ENCODE measurements at regions of chr4 and their contacts with region 1.

Region 1: GRCh38 chr4:69836287-69836686 is 23.7 kb downstream of the SULT1E1 start:
- DNase-seq: no peak
- H3K4me3 ChIP-seq: no peak overlapping the region
- H3K27ac ChIP-seq: no peak overlapping the region
- H3K4me1 ChIP-seq: no peaks in the 10 kb centered on the region
- H3K27me3 ChIP-seq: no peaks in the 10 kb centered on the region
- CTCF ChIP-seq: no peak

Region 2: DNA sequence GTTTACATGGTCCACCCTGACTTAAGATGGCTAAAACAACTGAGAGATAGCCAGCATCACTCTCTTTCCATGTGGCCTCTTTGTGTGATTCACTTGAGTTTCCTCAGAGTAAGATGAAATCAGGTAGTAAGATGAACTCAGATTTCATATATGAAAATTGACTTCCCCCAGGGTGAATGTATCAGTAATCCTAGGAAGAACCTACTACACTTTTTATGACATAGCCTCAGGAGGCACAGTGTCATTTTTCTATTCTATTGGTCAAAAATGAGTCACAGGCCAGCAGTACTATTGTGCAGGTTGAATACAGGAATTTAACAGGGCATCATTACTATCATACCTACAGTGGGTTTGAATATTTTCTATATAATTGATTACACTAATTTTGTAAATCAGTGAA is 38.2 kb after region 1 on chr4:
- intact Hi-C with region 1: loop called (anchors 5 kb)
- DNase-seq: no peak
- H3K4me3 ChIP-seq: no peak overlapping the region
- H3K27ac ChIP-seq: no peak overlapping the region
- H3K4me1 ChIP-seq: no peaks in the 10 kb centered on the region
- H3K27me3 ChIP-seq: no peaks in the 10 kb centered on the region
- CTCF ChIP-seq: no peak

Region 3: GRCh38 chr4:69920874-69921273 is 84.6 kb after region 1 on chr4:
- intact Hi-C with region 1: no loop called
- DNase-seq: no peak
- H3K4me3 ChIP-seq: no peak overlapping the region
- H3K27ac ChIP-seq: no peak overlapping the region
- H3K4me1 ChIP-seq: no peaks in the 10 kb centered on the region
- H3K27me3 ChIP-seq: no peaks in the 10 kb centered on the region
- CTCF ChIP-seq: no peak

Measured in colonic mucosa (tissue), 4 donors.